GM10248 (cell line): ENCODE measurements at regions of chr4 and their contacts with region 1.

Region 1: GRCh38 chr4:118850488-118851173 is 14.7 kb upstream of the SEC24D start:
- DNase-seq: peak; percentile 34
- CTCF ChIP-seq: no peak

Region 2: GRCh38 chr4:118684873-118685811 is 165.5 kb before region 1 on chr4 and contains the start of gene METTL14:
- CTCF ChIA-PET with region 1: no interaction called
- POLR2A ChIA-PET with region 1: no interaction called
- DNase-seq: peak; percentile 89
- CTCF ChIP-seq: no peak

Region 3: DNA sequence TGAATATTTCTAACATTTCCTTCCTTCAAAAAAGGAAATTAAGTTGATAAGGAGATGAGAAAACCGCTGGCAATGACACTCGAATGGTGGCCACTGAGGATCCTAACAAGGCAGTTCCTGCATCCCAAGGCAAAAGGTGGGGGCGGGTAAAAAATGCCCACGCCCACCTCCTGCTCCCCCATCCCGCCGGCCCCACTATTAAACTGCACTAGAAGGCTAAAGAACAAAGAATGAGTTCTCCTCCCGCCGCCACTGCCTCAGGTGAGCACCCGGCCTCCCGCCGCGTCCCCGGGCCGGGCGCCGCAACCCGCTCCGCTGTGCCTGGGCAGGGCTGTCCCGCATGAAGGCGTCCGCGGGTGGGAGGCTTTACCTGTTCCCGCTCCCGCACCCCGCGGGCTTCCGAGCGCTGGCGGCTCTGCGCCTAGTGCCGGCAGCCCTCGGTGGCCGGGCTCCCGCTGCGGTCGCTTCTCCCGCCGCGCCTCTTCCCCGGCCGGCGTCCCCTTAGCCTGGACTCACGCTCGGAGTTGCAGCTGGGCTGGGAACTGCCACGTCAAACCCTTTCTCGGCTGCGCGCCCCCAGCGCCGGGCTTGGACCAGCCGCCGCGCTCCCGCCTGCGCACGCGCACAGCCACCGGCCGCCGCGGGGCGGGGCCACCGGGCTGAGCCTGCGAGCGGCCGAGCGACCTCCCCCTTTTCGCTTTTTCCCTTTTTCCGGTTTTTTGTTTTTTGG is 14.9 kb before region 1 on chr4 and contains the start of gene SEC24D:
- CTCF ChIA-PET with region 1: interaction called, 13 read pairs
- POLR2A ChIA-PET with region 1: interaction called, 3 read pairs
- DNase-seq: peak; percentile 97
- CTCF ChIP-seq: no peak

Region 4: GRCh38 chr4:118865091-118865708 is 14.6 kb after region 1 on chr4:
- CTCF ChIA-PET with region 1: interaction called, 10 read pairs
- POLR2A ChIA-PET with region 1: no interaction called
- DNase-seq: peak; percentile 50
- CTCF ChIP-seq: peak; percentile 64